Tibial artery (tissue), 4 donors: ENCODE measurements at regions of chr10 and their contacts with region 1.

Region 1: DNA sequence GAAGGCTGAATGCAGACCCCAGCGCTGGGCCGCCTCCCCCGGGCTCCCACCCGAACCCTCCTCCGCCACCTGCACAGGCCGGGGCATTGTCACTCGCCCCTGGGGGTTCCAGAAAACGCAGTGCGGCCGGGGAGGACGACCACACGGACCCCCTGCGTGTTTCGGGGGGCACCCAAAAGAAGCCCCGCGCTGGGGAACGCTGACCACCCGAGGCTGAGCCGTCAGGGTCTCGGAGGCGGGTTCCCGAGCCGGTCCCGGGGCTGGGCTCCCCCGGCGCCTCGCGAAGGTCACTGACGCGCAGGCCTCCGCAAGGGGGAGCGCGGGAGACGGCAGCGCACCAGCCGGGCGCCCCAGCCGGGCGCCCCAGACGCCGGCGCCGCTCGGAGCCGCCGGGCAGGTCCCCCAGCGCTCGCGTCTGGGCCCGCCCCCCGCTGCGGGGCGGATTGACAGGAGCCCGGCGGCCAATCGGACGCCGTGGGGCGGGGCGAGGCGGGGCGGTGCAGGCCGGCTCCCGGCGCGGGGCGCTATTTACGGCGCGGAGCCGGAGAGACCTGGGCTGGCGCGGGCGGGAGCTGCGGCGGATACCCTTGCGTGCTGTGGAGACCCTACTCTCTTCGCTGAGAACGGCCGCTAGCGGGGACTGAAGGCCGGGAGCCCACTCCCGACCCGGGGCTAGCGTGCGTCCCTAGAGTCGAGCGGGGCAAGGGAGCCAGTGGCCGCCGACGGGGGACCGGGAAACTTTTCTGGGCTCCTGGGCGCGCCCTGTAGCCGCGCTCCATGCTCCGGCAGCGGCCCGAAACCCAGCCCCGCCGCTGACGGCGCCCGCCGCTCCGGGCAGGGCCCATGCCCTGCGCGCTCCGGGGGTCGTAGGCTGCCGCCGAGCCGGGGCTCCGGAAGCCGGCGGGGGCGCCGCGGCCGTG is at the start of gene BAMBI:
- DNase-seq: peak; percentile 90 to 93
- H3K4me3 ChIP-seq: peak within 1 kb of the TSS; percentile 79 to 86
- H3K27ac ChIP-seq: peak within 1 kb of the TSS; percentile 66 to 72
- H3K4me1 ChIP-seq: peaks cover 0 to 43% (median 19%) of the 10 kb centered on the region in 4 donors
- H3K27me3 ChIP-seq: no peaks in the 10 kb centered on the region
- CTCF ChIP-seq: peak; percentile 55 to 89

Region 2: GRCh38 chr10:27741173-27742091 is 935.8 kb before region 1 on chr10:
- intact Hi-C with region 1: no loop called
- DNase-seq: peak in 1 of 2 donors; percentile 64
- H3K4me3 ChIP-seq: peak overlapping the region; percentile 63 to 87
- H3K27ac ChIP-seq: peak overlapping the region; percentile 98 to 99
- H3K4me1 ChIP-seq: peaks cover 0 to 37% (median 19%) of the 10 kb centered on the region in 4 donors
- H3K27me3 ChIP-seq: peaks cover 0 to 3% of the 10 kb centered on the region in 2 donors
- CTCF ChIP-seq: no peak

Region 3: DNA sequence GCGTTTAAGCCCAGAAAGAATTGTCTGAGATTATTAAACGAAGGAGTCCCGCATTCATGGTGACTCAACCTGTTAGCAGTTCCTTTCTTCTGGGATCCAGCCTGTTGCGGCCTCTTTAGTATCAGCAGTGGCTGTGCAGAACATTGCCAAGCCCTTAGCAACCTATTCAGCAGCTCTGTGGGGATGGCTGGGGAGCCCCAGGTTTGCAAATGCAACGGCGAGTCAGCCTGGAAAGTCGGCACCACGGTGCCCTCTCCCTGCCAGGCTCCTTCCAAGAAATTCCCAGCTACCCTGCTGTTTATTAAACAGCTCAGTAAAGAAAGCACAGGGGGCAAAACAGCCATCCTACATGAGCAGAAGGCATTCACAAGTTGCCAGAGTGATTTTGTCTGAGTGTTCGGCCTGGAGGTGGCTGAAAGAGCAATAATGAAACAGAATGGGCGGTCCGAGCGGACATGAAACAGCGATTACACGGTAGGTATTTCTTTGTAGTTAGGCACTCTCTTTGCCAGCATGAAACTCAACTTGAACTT is 198.4 kb after region 1 on chr10:
- intact Hi-C with region 1: loop called (anchors 10 kb)
- DNase-seq: no peak
- H3K4me3 ChIP-seq: no peak overlapping the region
- H3K27ac ChIP-seq: no peak overlapping the region
- H3K4me1 ChIP-seq: peaks cover 0 to 19% (median 13%) of the 10 kb centered on the region in 4 donors
- H3K27me3 ChIP-seq: no peaks in the 10 kb centered on the region
- CTCF ChIP-seq: no peak

Region 4: GRCh38 chr10:28910956-28911355 is 233.7 kb after region 1 on chr10:
- intact Hi-C with region 1: no loop called
- DNase-seq: no peak
- H3K4me3 ChIP-seq: no peak overlapping the region
- H3K27ac ChIP-seq: peak overlapping the region; percentile 47 to 51
- H3K4me1 ChIP-seq: peaks cover 0 to 41% (median 9%) of the 10 kb centered on the region in 4 donors
- H3K27me3 ChIP-seq: no peaks in the 10 kb centered on the region
- CTCF ChIP-seq: no peak

Region 5: GRCh38 chr10:29181936-29182335 is 504.7 kb after region 1 on chr10:
- intact Hi-C with region 1: no loop called
- DNase-seq: no peak
- H3K4me3 ChIP-seq: no peak overlapping the region
- H3K27ac ChIP-seq: no peak overlapping the region
- H3K4me1 ChIP-seq: peaks cover 0 to 7% (median 0%) of the 10 kb centered on the region in 4 donors
- H3K27me3 ChIP-seq: peaks cover 0 to 4% of the 10 kb centered on the region in 2 donors
- CTCF ChIP-seq: no peak